B cell (primary cell): ENCODE measurements at regions of chr11 and their contacts with region 1.

Region 1: GRCh38 chr11:64185816-64186498 is at the start of gene STIP1:
- DNase-seq: peak; percentile 100
- ATAC-seq: peak; percentile 85
- H3K4me3 ChIP-seq: peak within 1 kb of the TSS; percentile 16 to 95 (median 83)
- H3K4me3 Mint-ChIP-seq: no peak within 1 kb of the TSS
- H3K27ac ChIP-seq: peak within 1 kb of the TSS; percentile 59 to 86
- H3K27ac Mint-ChIP-seq: peak within 1 kb of the TSS; percentile 94
- H3K4me1 ChIP-seq: peaks cover 13 to 24% of the 10 kb centered on the region in 2 donors
- H3K4me1 Mint-ChIP-seq: peaks cover 40% of the 10 kb centered on the region
- H3K27me3 ChIP-seq: no peaks in the 10 kb centered on the region
- H3K27me3 Mint-ChIP-seq: no peaks in the 10 kb centered on the region
- CTCF ChIP-seq: peak; percentile 37
- total RNA-seq, gene STIP1: 78.7 and 87.8 TPM in 2 replicates

Region 2: GRCh38 chr11:64225612-64226506 is 39.9 kb after region 1 on chr11 and contains the starts of genes NUDT22 and TRPT1:
- CTCF ChIA-PET with region 1: interaction called, 8 read pairs
- POLR2A ChIA-PET with region 1: interaction called, 7 read pairs
- intact Hi-C with region 1: loop called (anchors 1 kb)
- DNase-seq: peak; percentile 91
- ATAC-seq: peak; percentile 53
- H3K4me3 ChIP-seq: peak within 1 kb of the TSS; percentile 64 to 97 (median 92)
- H3K4me3 Mint-ChIP-seq: peak within 1 kb of the TSS; percentile 91
- H3K27ac ChIP-seq: peak within 1 kb of the TSS; percentile 82 to 86
- H3K27ac Mint-ChIP-seq: peak within 1 kb of the TSS; percentile 93
- H3K4me1 ChIP-seq: peaks cover 26 to 41% of the 10 kb centered on the region in 2 donors
- H3K4me1 Mint-ChIP-seq: peaks cover 43% of the 10 kb centered on the region
- H3K27me3 ChIP-seq: no peaks in the 10 kb centered on the region
- H3K27me3 Mint-ChIP-seq: no peaks in the 10 kb centered on the region
- CTCF ChIP-seq: peak; percentile 63
- total RNA-seq, gene NUDT22: 97.2 and 104 TPM in 2 replicates
- total RNA-seq, gene TRPT1: 59.6 and 62.0 TPM in 2 replicates

Region 3: DNA sequence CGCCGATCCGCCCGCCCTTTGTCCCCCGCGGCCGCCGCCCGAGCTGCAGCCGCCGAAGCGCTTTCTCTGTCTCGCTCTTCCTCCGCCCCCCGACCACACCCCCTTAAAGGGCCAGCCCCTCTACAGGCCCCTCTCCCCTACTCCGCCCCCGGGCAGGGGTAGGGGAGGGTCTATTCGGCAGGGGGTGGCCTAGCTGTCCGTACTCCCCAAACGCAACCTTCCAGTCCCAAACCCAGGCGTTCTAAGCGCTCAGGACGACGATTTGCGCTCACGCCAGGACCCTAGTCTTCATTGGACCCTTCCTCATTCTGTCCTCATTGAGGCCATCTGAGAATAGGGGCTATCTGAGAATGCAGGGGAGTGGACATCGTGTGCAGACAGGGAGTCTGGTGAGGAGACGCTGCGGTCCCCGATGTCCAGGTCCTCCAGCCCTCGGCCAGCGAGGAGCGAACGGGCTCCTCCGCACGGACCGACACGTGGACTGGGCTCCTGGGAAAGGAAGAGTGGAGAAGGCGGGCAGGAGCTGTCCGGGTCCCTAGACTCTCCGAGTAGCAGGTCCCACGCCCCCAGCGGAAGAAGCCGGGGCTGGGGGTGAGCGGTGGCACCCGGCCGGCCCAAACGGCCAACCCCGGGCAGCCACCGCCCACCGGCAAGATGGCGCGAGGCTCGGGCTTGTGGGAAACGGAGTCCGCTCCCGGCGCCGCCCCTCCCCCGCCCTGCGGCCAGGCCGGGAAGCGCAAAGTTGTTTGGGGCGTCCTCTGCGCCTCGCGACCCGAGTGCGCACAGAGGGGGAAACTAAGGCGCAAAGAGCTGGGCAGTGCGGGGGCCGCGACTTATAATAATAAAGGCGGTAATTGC is 61.1 kb after region 1 on chr11 and contains the start of gene PPP1R14B:
- CTCF ChIA-PET with region 1: interaction called, 10 read pairs
- POLR2A ChIA-PET with region 1: interaction called, 3 read pairs
- intact Hi-C with region 1: loop called (anchors 1 kb)
- DNase-seq: peak; percentile 85
- ATAC-seq: peak; percentile 60
- H3K4me3 ChIP-seq: peak within 1 kb of the TSS; percentile 78 to 99 (median 88)
- H3K4me3 Mint-ChIP-seq: peak within 1 kb of the TSS; percentile 90
- H3K27ac ChIP-seq: peak within 1 kb of the TSS; percentile 53 to 79
- H3K27ac Mint-ChIP-seq: peak within 1 kb of the TSS; percentile 91
- H3K4me1 ChIP-seq: peaks cover 26 to 54% of the 10 kb centered on the region in 2 donors
- H3K4me1 Mint-ChIP-seq: peaks cover 40% of the 10 kb centered on the region
- H3K27me3 ChIP-seq: no peaks in the 10 kb centered on the region
- H3K27me3 Mint-ChIP-seq: no peaks in the 10 kb centered on the region
- CTCF ChIP-seq: no peak
- total RNA-seq, gene PPP1R14B: 39.2 and 41.2 TPM in 2 replicates

Region 4: DNA sequence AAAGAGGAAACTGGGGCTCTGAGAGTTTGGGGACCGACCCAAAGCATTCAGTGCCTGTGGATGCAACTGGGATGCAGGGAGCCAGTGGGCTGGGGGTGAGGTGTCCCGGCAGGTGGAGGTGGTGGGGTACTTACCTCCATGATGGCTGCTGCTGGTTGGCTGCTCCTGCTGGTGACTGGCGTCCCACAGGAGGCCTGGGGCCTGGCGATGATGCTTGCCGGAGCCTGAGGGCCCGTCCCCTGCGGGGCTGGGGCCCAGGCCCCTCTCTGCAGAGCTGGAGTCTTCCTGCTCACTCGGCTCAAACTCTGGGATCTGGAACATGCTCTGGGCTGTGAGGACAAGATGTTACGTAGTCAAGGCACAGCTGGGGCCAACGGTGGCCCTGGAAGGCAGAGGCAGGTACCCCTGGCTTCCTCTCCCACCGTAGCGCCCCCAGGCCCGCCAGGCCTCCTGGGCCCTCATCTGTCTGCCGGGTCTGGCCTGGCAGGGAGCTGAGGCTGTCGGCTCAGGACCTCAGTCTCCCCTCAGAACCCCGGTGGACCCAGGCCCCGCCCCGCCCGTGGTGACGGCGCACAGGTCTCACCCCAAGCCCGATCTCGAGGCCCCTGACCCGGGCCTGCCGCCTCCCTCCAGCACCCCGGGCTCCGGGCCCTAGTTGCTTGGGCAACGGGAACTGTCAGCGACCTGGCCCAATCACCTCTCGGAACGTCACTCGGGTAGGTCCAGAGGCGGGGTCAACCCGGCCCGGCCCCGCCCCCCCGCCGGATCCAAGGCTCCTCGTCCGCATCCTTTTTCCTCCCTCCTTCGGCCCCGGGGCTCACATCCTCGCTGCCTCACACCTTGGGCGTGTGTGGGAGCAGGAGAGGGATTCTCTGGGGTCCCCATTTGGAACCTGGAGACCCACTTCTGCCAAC is 98.3 kb after region 1 on chr11 and contains the start of gene BAD:
- CTCF ChIA-PET with region 1: no interaction called
- POLR2A ChIA-PET with region 1: no interaction called
- intact Hi-C with region 1: loop called (anchors 1 kb)
- DNase-seq: peak; percentile 96
- ATAC-seq: peak; percentile 77
- H3K4me3 ChIP-seq: peak within 1 kb of the TSS; percentile 61 to 97 (median 90)
- H3K4me3 Mint-ChIP-seq: peak within 1 kb of the TSS; percentile 90
- H3K27ac ChIP-seq: peak within 1 kb of the TSS; percentile 100
- H3K27ac Mint-ChIP-seq: peak within 1 kb of the TSS; percentile 96
- H3K4me1 ChIP-seq: peaks cover 13 to 18% of the 10 kb centered on the region in 2 donors
- H3K4me1 Mint-ChIP-seq: peaks cover 20% of the 10 kb centered on the region
- H3K27me3 ChIP-seq: no peaks in the 10 kb centered on the region
- H3K27me3 Mint-ChIP-seq: no peaks in the 10 kb centered on the region
- CTCF ChIP-seq: no peak
- total RNA-seq, gene BAD: 24.0 and 25.0 TPM in 2 replicates